ENCODE measurements at regions of chr2 and their contacts with region 1.

Region 1: DNA sequence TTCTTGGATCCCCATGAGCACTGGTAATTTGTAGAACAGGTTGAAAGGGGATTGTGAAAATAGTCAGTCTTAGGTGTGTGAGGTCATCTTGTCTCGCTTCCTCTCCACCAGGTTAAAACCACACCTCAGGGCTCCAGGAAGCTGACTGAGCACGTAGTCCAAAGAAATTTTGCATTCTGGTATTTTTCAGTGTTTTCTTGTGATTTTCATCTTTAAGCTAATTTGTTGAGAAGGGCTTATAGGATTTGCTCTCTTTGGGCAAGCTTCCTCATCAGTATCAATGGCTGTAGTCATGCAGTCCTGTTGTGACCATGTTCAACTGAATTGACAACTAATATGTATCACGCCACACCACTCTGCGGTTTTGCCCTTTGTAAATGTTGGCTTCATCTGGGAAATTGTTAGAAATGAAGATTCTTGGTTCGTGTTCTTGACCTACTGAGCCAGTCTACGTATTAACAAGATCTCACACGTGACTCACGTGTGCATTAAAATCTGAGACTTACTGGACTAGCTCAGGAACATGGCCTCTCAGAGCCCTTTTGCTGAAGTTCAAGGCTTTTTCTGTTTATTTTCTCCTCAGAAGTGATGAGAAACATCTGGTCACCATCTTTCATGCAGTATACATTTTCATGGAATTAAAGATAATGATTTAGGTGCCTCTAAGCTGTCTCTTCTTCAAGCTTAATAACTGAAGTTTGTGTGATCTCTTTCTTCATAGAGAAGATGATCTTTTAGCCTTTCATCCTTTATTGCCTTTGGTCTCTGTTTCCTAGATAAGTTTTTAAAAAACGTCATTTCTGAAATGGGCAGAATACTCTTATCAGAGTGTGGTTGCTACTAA is 32.8 kb downstream of the FMNL2 start:
- DNase-seq: no peak
- ATAC-seq: no peak
- H3K4me3 ChIP-seq: no peak overlapping the region
- H3K27ac ChIP-seq: no peak overlapping the region
- H3K4me1 ChIP-seq: peaks cover 23% of the 10 kb centered on the region
- H3K27me3 ChIP-seq: no peaks in the 10 kb centered on the region
- CTCF ChIP-seq: no peak

Region 2: GRCh38 chr2:153373510-153374279 is 1005.9 kb after region 1 on chr2:
- intact Hi-C with region 1: loop called in 1 of 2 experiments (anchors 5 kb)
- DNase-seq: no peak
- ATAC-seq: no peak
- H3K4me3 ChIP-seq: no peak overlapping the region
- H3K27ac ChIP-seq: no peak overlapping the region
- H3K4me1 ChIP-seq: no peaks in the 10 kb centered on the region
- H3K27me3 ChIP-seq: no peaks in the 10 kb centered on the region
- CTCF ChIP-seq: no peak

Measured in psoas muscle (tissue), 8 donors.